ENCODE measurements at regions of chr1 and their contacts with region 1.

Region 1: GRCh38 chr1:151909150-151910149 is at the start of gene THEM4:
- DNase-seq: peak; percentile 67 to 94 (median 80)
- ATAC-seq: peak; percentile 97
- H3K4me3 ChIP-seq: peak within 1 kb of the TSS; percentile 67
- H3K4me3 Mint-ChIP-seq: peak within 1 kb of the TSS; percentile 79 to 93 (median 88)
- H3K27ac ChIP-seq: peak within 1 kb of the TSS; percentile 82
- H3K27ac Mint-ChIP-seq: peak within 1 kb of the TSS; percentile 82 to 98 (median 90)
- H3K4me1 ChIP-seq: peaks cover 23 to 39% of the 10 kb centered on the region in 2 donors
- H3K4me1 Mint-ChIP-seq: peaks cover 21 to 47% (median 37%) of the 10 kb centered on the region in 7 donors
- H3K27me3 ChIP-seq: no peaks in the 10 kb centered on the region
- H3K27me3 Mint-ChIP-seq: peaks cover 0 to 8% (median 0%) of the 10 kb centered on the region in 5 donors
- total RNA-seq, gene THEM4: 37.6 to 143 (median 44.6) TPM

Region 2: GRCh38 chr1:151425103-151425502 is 484.3 kb before region 1 on chr1:
- CTCF ChIA-PET with region 1: no interaction called
- POLR2A ChIA-PET with region 1: no interaction called
- intact Hi-C with region 1: no loop called
- DNase-seq: no peak
- ATAC-seq: no peak
- H3K4me3 ChIP-seq: no peak overlapping the region
- H3K4me3 Mint-ChIP-seq: no peak overlapping the region
- H3K27ac ChIP-seq: no peak overlapping the region
- H3K27ac Mint-ChIP-seq: peak overlapping the region in 2 of 9 donors; percentile 41 to 48
- H3K4me1 ChIP-seq: no peaks in the 10 kb centered on the region
- H3K4me1 Mint-ChIP-seq: peaks cover 0 to 2% (median 0%) of the 10 kb centered on the region in 7 donors
- H3K27me3 ChIP-seq: no peaks in the 10 kb centered on the region
- H3K27me3 Mint-ChIP-seq: no peaks in the 10 kb centered on the region

Region 3: DNA sequence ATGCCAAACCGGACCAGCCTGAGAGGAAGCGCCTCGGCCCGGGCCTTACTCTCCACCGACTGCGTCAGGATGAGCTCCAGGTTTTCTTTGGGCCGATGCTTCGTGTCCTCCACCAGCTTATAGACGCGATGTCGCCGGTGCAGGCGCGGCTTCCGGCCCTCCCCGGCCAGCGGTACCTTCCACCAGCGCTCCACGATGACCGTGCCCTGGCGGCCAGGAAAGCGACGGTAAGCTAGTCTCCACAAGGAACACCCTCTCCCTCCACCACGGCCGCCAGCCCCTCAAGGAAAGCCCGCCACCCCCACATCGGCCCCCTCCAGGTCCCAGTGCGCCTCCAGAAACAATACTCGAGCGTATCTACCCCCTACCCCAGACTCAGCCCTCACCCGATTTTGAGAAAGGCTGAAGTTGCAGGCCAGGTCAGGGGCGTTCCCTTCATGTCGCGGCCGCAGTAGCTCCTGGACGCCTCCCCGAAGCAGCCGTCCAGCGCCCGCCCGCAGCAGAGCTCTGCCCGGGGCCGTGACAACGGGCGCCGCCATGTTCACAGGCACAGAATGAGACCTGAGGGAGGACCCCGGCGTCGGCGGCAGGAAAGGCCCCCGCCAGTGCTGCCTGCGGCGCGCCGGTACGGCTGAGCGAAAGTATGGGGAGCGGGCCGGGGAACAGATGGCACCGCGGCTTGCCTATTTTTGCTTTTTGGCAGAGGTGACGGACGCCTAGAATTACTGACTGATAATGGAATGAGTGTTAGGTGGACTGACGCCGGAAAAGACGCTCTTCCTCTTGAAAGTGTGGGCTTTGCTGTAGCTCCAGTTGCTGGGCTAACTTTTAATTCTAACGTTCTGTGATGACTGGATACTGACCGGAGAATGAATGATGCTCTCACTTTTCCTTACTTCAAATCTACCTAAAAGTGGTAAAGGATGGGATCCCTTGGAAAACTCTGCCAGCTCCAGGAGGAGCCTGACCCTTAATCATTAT is 146.2 kb before region 1 on chr1 and contains the start of gene MRPL9:
- CTCF ChIA-PET with region 1: no interaction called
- POLR2A ChIA-PET with region 1: interaction called, 3 read pairs
- intact Hi-C with region 1: loop called in 1 of 2 experiments (anchors 5 kb)
- DNase-seq: peak; percentile 73 to 85 (median 82)
- ATAC-seq: peak; percentile 99
- H3K4me3 ChIP-seq: peak within 1 kb of the TSS; percentile 76
- H3K4me3 Mint-ChIP-seq: peak within 1 kb of the TSS; percentile 91 to 98 (median 95)
- H3K27ac ChIP-seq: peak within 1 kb of the TSS; percentile 81
- H3K27ac Mint-ChIP-seq: peak within 1 kb of the TSS; percentile 92 to 100 (median 97)
- H3K4me1 ChIP-seq: peaks cover 11 to 12% of the 10 kb centered on the region in 2 donors
- H3K4me1 Mint-ChIP-seq: peaks cover 13 to 28% (median 21%) of the 10 kb centered on the region in 7 donors
- H3K27me3 ChIP-seq: no peaks in the 10 kb centered on the region
- H3K27me3 Mint-ChIP-seq: no peaks in the 10 kb centered on the region
- total RNA-seq, gene MRPL9: 77.0 to 133 (median 81.5) TPM

Region 4: GRCh38 chr1:151839457-151840405 is 69.7 kb before region 1 on chr1 and contains the start of gene C2CD4D:
- CTCF ChIA-PET with region 1: no interaction called
- POLR2A ChIA-PET with region 1: interaction called, 3 read pairs
- intact Hi-C with region 1: loop called in 1 of 2 experiments (anchors 2 kb)
- DNase-seq: peak; percentile 42 to 77 (median 66)
- ATAC-seq: peak; percentile 89
- H3K4me3 ChIP-seq: peak within 1 kb of the TSS; percentile 68
- H3K4me3 Mint-ChIP-seq: peak within 1 kb of the TSS; percentile 68 to 89 (median 82)
- H3K27ac ChIP-seq: peak within 1 kb of the TSS; percentile 55
- H3K27ac Mint-ChIP-seq: peak within 1 kb of the TSS; percentile 31 to 87 (median 77)
- H3K4me1 ChIP-seq: peaks cover 27 to 38% of the 10 kb centered on the region in 2 donors
- H3K4me1 Mint-ChIP-seq: peaks cover 33 to 53% (median 40%) of the 10 kb centered on the region in 7 donors
- H3K27me3 ChIP-seq: no peaks in the 10 kb centered on the region
- H3K27me3 Mint-ChIP-seq: peaks cover 0 to 8% (median 0%) of the 10 kb centered on the region in 5 donors
- total RNA-seq, gene C2CD4D: 0.34 to 0.87 TPM in 2 of 5 experiments, not detected in the others

Region 5: GRCh38 chr1:151867785-151868411 is 41.6 kb before region 1 on chr1:
- CTCF ChIA-PET with region 1: no interaction called
- POLR2A ChIA-PET with region 1: no interaction called
- intact Hi-C with region 1: no loop called
- DNase-seq: no peak
- ATAC-seq: peak; percentile 38
- H3K4me3 ChIP-seq: no peak overlapping the region
- H3K4me3 Mint-ChIP-seq: no peak overlapping the region
- H3K27ac ChIP-seq: no peak overlapping the region
- H3K27ac Mint-ChIP-seq: peak overlapping the region in 1 of 9 donors; percentile 25
- H3K4me1 ChIP-seq: no peaks in the 10 kb centered on the region
- H3K4me1 Mint-ChIP-seq: peaks cover 0 to 9% (median 7%) of the 10 kb centered on the region in 7 donors
- H3K27me3 ChIP-seq: no peaks in the 10 kb centered on the region
- H3K27me3 Mint-ChIP-seq: peaks cover 0 to 2% (median 0%) of the 10 kb centered on the region in 5 donors

Region 6: GRCh38 chr1:151888972-151889570 is 20.4 kb before region 1 on chr1:
- CTCF ChIA-PET with region 1: interaction called, 15 read pairs
- POLR2A ChIA-PET with region 1: interaction called, 19 read pairs
- intact Hi-C with region 1: loop called in 1 of 2 experiments (anchors 1 kb)
- DNase-seq: peak in 5 of 9 donors; percentile 27 to 48 (median 37)
- ATAC-seq: peak; percentile 68
- H3K4me3 ChIP-seq: no peak overlapping the region
- H3K4me3 Mint-ChIP-seq: no peak overlapping the region
- H3K27ac ChIP-seq: no peak overlapping the region
- H3K27ac Mint-ChIP-seq: peak overlapping the region in 7 of 9 donors; percentile 7 to 91 (median 70)
- H3K4me1 ChIP-seq: peaks cover 0 to 12% of the 10 kb centered on the region in 2 donors
- H3K4me1 Mint-ChIP-seq: peaks cover 18 to 40% (median 38%) of the 10 kb centered on the region in 7 donors
- H3K27me3 ChIP-seq: no peaks in the 10 kb centered on the region
- H3K27me3 Mint-ChIP-seq: no peaks in the 10 kb centered on the region

Region 7: DNA sequence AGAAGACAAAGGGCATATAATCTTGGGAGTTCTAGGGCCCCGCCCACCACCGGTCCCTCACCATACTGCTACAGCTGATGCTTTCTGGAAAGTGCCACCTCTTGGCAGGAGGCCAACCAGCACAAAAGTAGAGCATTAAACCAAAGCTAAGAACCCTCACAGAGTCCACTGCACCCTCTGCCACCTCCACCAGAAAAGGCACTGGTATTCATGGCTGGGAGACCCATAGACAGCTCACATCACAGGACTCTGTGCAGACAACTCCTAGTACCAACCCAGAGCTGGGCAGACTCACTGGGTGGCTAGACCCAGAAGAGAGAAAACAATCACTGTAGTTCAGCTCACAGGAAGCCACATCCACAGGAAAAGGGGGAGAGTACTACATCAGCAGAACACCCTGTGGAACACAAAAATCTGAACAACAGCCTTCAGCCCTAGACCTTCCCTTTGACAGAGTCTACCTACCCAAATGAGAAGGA is 10.9 kb before region 1 on chr1:
- CTCF ChIA-PET with region 1: interaction called, 31 read pairs
- POLR2A ChIA-PET with region 1: interaction called, 133 read pairs
- intact Hi-C with region 1: loop called (anchors 1 kb)
- DNase-seq: peak; percentile 16 to 88 (median 83)
- ATAC-seq: peak; percentile 89
- H3K4me3 ChIP-seq: peak overlapping the region; percentile 61
- H3K4me3 Mint-ChIP-seq: peak overlapping the region; percentile 76 to 91 (median 84)
- H3K27ac ChIP-seq: peak overlapping the region; percentile 66
- H3K27ac Mint-ChIP-seq: peak overlapping the region; percentile 85 to 100 (median 97)
- H3K4me1 ChIP-seq: peaks cover 29 to 52% of the 10 kb centered on the region in 2 donors
- H3K4me1 Mint-ChIP-seq: peaks cover 53 to 91% (median 69%) of the 10 kb centered on the region in 7 donors
- H3K27me3 ChIP-seq: no peaks in the 10 kb centered on the region
- H3K27me3 Mint-ChIP-seq: no peaks in the 10 kb centered on the region

Region 8: GRCh38 chr1:151924679-151925587 is 15.5 kb after region 1 on chr1:
- CTCF ChIA-PET with region 1: interaction called, 3 read pairs
- POLR2A ChIA-PET with region 1: interaction called, 10 read pairs
- intact Hi-C with region 1: loop called in 1 of 2 experiments (anchors 2 kb)
- DNase-seq: no peak
- ATAC-seq: peak; percentile 61
- H3K4me3 ChIP-seq: no peak overlapping the region
- H3K4me3 Mint-ChIP-seq: peak overlapping the region in 6 of 10 donors; percentile 15 to 54 (median 35)
- H3K27ac ChIP-seq: peak overlapping the region; percentile 5
- H3K27ac Mint-ChIP-seq: peak overlapping the region; percentile 23 to 87 (median 60)
- H3K4me1 ChIP-seq: peaks cover 5 to 10% of the 10 kb centered on the region in 2 donors
- H3K4me1 Mint-ChIP-seq: peaks cover 9 to 25% (median 17%) of the 10 kb centered on the region in 7 donors
- H3K27me3 ChIP-seq: no peaks in the 10 kb centered on the region
- H3K27me3 Mint-ChIP-seq: peaks cover 0 to 2% (median 0%) of the 10 kb centered on the region in 5 donors

Region 9: GRCh38 chr1:151934048-151934493 is 24.6 kb after region 1 on chr1:
- CTCF ChIA-PET with region 1: interaction called, 3 read pairs
- POLR2A ChIA-PET with region 1: interaction called, 11 read pairs
- intact Hi-C with region 1: loop called in 1 of 2 experiments (anchors 1 kb)
- DNase-seq: peak in 7 of 9 donors; percentile 31 to 69 (median 59)
- ATAC-seq: peak; percentile 94
- H3K4me3 ChIP-seq: no peak overlapping the region
- H3K4me3 Mint-ChIP-seq: peak overlapping the region in 1 of 10 donors; percentile 49
- H3K27ac ChIP-seq: no peak overlapping the region
- H3K27ac Mint-ChIP-seq: peak overlapping the region in 1 of 9 donors; percentile 41
- H3K4me1 ChIP-seq: no peaks in the 10 kb centered on the region
- H3K4me1 Mint-ChIP-seq: peaks cover 0 to 6% (median 4%) of the 10 kb centered on the region in 7 donors
- H3K27me3 ChIP-seq: no peaks in the 10 kb centered on the region
- H3K27me3 Mint-ChIP-seq: peaks cover 0 to 33% (median 0%) of the 10 kb centered on the region in 5 donors

Region 10: GRCh38 chr1:152162806-152163463 is 253.5 kb after region 1 on chr1:
- CTCF ChIA-PET with region 1: no interaction called
- POLR2A ChIA-PET with region 1: no interaction called
- intact Hi-C with region 1: no loop called
- DNase-seq: no peak
- ATAC-seq: no peak
- H3K4me3 ChIP-seq: no peak overlapping the region
- H3K4me3 Mint-ChIP-seq: no peak overlapping the region
- H3K27ac ChIP-seq: no peak overlapping the region
- H3K27ac Mint-ChIP-seq: no peak overlapping the region
- H3K4me1 ChIP-seq: no peaks in the 10 kb centered on the region
- H3K4me1 Mint-ChIP-seq: peaks cover 8 to 11% (median 8%) of the 10 kb centered on the region in 7 donors
- H3K27me3 ChIP-seq: no peaks in the 10 kb centered on the region
- H3K27me3 Mint-ChIP-seq: peaks cover 0 to 16% (median 4%) of the 10 kb centered on the region in 5 donors

Measured in naive thymus-derived CD4-positive, alpha-beta T cell (primary cell).